ENCODE measurements at regions of chr2 and their contacts with region 1.

Region 1: GRCh38 chr2:177618255-177619253 is 226.0 kb downstream of the AGPS start:
- DNase-seq: peak; percentile 80
- ATAC-seq: peak; percentile 98
- H3K4me3 ChIP-seq: peak overlapping the region; percentile 57
- H3K27ac ChIP-seq: peak overlapping the region; percentile 99
- H3K4me1 ChIP-seq: no peaks in the 10 kb centered on the region; the same call in 1 of the 2 replicates
- H3K27me3 ChIP-seq: no peaks in the 10 kb centered on the region
- CTCF ChIP-seq: no peak
- EP300 ChIP-seq: no peak
- POLR2A ChIP-seq: peak; percentile 87
- RAD21 ChIP-seq: no peak

Region 2: DNA sequence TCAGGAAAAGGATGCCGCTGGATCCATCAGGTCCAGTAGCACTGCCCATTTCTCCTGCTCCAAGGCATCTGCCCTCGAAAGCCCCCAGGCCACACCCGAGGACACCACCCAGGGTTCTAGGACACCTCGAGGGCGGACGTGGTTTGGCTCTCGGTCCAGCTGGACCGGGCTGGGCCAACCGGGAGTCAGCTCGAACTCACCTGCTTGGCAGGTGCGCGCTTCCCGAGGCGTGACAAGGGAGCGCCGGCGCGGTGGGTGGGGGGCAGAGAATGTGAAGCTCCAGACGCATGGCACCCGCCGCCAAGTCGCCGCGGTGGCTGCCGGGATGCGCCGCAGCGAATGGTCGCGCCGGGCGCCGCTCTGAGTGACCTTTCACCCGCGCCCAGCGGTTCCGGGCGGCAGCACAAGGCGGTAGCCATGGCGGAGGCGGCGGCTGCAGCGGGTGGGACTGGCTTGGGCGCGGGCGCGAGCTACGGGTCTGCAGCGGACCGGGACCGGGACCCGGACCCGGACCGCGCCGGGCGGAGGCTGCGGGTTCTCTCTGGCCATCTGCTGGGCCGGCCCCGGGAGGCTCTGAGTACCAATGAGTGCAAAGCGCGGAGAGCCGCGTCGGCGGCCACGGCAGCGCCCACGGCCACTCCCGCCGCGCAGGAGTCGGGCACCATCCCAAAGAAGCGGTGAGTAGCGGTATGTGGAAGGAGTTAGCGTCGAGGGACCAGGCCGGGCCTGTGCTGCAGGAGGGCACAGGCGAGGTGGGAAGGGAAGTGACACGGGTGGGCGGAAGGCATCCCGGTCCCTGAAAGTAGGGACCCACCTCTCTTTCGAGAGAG is 226.0 kb before region 1 on chr2 and contains the start of gene AGPS:
- CTCF ChIA-PET with region 1: no interaction called
- POLR2A ChIA-PET with region 1: no interaction called
- RAD21 ChIA-PET with region 1: no interaction called
- SMC1A ChIA-PET with region 1: no interaction called
- in situ Hi-C with region 1: no loop called
- intact Hi-C with region 1: no loop called
- DNase-seq: peak; percentile 30
- ATAC-seq: peak; percentile 92
- H3K4me3 ChIP-seq: peak within 1 kb of the TSS; percentile 91
- H3K27ac ChIP-seq: peak within 1 kb of the TSS; percentile 66
- H3K4me1 ChIP-seq: peaks cover 20% of the 10 kb centered on the region
- H3K27me3 ChIP-seq: no peaks in the 10 kb centered on the region
- CTCF ChIP-seq: no peak
- EP300 ChIP-seq: no peak
- POLR2A ChIP-seq: peak; percentile 94
- RAD21 ChIP-seq: no peak
- polyA plus RNA-seq, gene AGPS: 7.9 to 11.1 TPM

Region 3: DNA sequence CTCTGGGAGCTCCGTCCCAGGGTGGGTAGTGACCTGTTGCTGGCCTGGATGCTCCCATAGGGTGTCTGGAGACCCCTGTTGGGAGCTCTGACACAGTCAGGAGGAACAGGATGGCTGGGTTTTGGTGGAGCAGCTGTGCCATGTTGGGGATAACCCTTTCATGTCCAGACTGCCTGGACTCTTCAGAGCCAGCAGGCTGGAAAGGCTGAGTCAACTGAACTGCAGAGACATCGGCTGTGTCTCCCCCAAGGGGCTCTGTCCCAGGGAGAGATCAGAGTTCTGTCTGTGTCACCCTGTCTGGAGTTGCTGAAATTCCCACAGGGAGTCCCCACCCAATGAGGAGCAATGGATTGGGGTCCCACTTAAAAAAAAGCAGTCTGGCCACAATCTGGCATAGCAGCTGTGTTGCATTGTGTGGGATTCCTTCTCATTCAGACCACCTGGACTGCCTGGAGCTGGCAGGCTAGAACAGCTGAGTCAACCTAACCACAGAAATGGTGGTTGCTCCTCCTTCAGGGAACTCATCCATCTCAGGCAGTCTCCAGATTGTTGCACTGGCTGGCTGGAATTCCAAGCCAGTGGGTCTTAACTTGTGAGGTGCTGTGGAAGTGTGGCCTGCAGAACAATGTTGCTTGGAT is 188.7 kb before region 1 on chr2:
- CTCF ChIA-PET with region 1: no interaction called
- POLR2A ChIA-PET with region 1: no interaction called
- RAD21 ChIA-PET with region 1: no interaction called
- SMC1A ChIA-PET with region 1: no interaction called
- in situ Hi-C with region 1: no loop called
- intact Hi-C with region 1: no loop called
- DNase-seq: no peak
- ATAC-seq: no peak
- H3K4me3 ChIP-seq: no peak overlapping the region
- H3K27ac ChIP-seq: no peak overlapping the region
- H3K4me1 ChIP-seq: no peaks in the 10 kb centered on the region
- H3K27me3 ChIP-seq: no peaks in the 10 kb centered on the region
- CTCF ChIP-seq: no peak
- EP300 ChIP-seq: no peak
- POLR2A ChIP-seq: no peak
- RAD21 ChIP-seq: no peak

Region 4: DNA sequence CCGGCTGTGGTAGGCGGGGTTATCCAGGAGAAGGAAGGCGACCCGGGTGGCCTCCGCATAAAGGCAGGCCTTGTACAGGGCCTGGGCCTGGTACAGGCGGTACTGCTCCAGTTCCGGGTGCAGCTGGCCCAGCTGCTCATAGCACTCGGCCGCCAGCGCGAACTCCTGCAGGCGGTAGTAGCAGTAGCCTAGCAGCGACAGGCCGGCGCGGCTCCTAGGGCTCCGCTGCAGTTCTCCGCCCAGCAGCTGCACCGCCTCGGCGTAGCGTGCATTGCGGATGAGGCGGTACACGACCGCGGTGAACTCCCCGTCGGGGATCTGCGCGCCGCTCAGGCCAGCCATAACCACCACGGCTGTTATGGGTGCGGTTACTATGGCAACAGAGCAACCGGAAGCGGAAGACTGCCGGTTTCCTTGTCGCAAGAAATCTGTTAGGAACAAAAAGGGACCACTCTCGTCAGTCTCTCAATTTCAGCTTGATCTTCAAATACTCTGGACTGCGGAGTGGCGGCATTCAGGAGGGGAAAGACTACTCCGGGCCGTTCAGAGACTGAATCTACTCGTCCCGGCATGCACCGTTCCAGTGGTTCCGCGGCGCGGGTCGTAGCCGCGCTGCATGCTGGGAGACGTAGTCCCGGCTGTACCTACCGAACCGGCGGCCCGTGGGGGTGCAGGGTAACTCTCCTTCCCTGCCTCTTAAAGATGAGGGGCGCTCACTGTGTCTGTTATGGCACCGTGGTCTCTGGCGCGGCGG is 66.0 kb before region 1 on chr2:
- CTCF ChIA-PET with region 1: no interaction called
- POLR2A ChIA-PET with region 1: no interaction called
- RAD21 ChIA-PET with region 1: no interaction called
- SMC1A ChIA-PET with region 1: interaction called, 5 read pairs
- in situ Hi-C with region 1: no loop called
- intact Hi-C with region 1: loop called (anchors 5 kb)
- DNase-seq: peak; percentile 68
- ATAC-seq: peak; percentile 96
- H3K4me3 ChIP-seq: peak overlapping the region; percentile 82
- H3K27ac ChIP-seq: peak overlapping the region; percentile 100
- H3K4me1 ChIP-seq: peaks cover 14% of the 10 kb centered on the region
- H3K27me3 ChIP-seq: no peaks in the 10 kb centered on the region
- CTCF ChIP-seq: no peak
- EP300 ChIP-seq: no peak; a peak in 1 of 4 replicates
- POLR2A ChIP-seq: peak; percentile 66; the same call in 1 of the 2 replicates
- RAD21 ChIP-seq: no peak

Region 5: GRCh38 chr2:177604271-177605065 is 14.1 kb before region 1 on chr2:
- CTCF ChIA-PET with region 1: interaction called, 7 read pairs
- POLR2A ChIA-PET with region 1: no interaction called
- RAD21 ChIA-PET with region 1: no interaction called
- SMC1A ChIA-PET with region 1: interaction called, 13 read pairs
- in situ Hi-C with region 1: no loop called
- intact Hi-C with region 1: no loop called
- DNase-seq: no peak
- ATAC-seq: peak; percentile 58
- H3K4me3 ChIP-seq: no peak overlapping the region
- H3K27ac ChIP-seq: no peak overlapping the region
- H3K4me1 ChIP-seq: no peaks in the 10 kb centered on the region
- H3K27me3 ChIP-seq: no peaks in the 10 kb centered on the region
- CTCF ChIP-seq: peak; percentile 58 to 63 (median 59); a peak in 5 of 6 replicates
- EP300 ChIP-seq: no peak
- POLR2A ChIP-seq: no peak
- RAD21 ChIP-seq: peak; percentile 63

Region 6: DNA sequence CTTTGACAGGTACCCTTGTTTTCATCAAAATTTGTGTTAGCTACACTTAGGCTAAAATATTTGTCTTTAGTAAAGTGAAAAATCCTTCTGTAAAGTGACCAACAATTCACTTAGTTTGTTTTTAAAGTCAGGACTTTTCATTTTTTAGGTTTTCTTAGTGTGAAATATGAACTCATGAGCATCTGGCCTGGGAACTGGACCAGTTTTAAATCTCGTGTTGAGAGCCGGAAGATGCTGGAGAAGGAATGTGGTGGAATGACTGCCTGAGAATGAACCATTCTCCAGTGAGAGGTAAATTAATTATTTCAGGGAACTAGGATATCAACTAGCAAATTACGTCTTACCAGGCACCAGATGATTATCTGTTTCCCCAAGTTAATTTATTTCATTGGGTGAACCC is 79.7 kb after region 1 on chr2:
- CTCF ChIA-PET with region 1: no interaction called
- POLR2A ChIA-PET with region 1: no interaction called
- RAD21 ChIA-PET with region 1: no interaction called
- SMC1A ChIA-PET with region 1: no interaction called
- in situ Hi-C with region 1: no loop called
- intact Hi-C with region 1: no loop called
- DNase-seq: no peak
- ATAC-seq: no peak
- H3K4me3 ChIP-seq: no peak overlapping the region
- H3K27ac ChIP-seq: no peak overlapping the region
- H3K4me1 ChIP-seq: no peaks in the 10 kb centered on the region
- H3K27me3 ChIP-seq: no peaks in the 10 kb centered on the region
- CTCF ChIP-seq: no peak
- EP300 ChIP-seq: no peak
- POLR2A ChIP-seq: no peak
- RAD21 ChIP-seq: no peak

Region 7: DNA sequence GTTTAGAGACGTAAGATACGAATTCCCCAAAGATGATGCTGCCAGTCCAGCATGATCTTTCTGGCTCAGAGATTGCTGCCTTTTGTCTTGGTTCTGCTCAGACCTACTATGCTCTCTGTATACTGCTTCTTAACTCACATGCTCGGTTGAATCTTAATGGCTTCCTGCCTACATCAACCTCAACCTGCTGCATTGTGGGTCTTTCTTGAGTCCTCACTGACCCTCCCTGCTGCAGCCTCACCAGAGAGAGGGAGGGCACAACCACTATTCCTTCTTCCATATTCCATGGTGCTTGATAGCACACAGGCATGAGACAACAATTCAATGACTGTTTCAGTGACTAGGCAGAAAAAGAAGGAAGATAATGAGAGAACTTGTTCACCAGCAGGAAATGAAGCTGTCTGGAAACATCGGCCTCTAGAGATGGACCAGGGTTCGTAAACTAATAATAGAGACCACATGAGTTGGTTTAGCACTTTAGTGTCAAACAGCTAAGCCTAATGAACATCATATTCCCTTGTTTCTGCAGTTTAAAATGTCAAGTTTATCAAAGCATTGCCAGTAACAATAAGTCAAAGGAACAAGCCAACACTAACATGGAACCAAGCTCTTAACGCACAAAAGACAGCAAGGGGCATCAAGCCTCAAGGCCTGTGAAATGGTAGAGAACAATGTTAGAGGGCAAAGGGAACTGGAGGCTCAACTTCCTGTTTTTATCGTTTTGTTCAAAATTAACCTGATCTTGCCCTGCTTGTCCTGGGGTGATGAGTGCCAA is 120.1 kb after region 1 on chr2:
- CTCF ChIA-PET with region 1: no interaction called
- POLR2A ChIA-PET with region 1: no interaction called
- RAD21 ChIA-PET with region 1: no interaction called
- SMC1A ChIA-PET with region 1: no interaction called
- in situ Hi-C with region 1: no loop called
- intact Hi-C with region 1: no loop called
- DNase-seq: no peak
- ATAC-seq: no peak
- H3K4me3 ChIP-seq: no peak overlapping the region
- H3K27ac ChIP-seq: no peak overlapping the region
- H3K4me1 ChIP-seq: no peaks in the 10 kb centered on the region
- H3K27me3 ChIP-seq: no peaks in the 10 kb centered on the region; a peak in 1 of 4 replicates
- CTCF ChIP-seq: no peak
- EP300 ChIP-seq: no peak
- POLR2A ChIP-seq: no peak
- RAD21 ChIP-seq: no peak